ENCODE measurements at regions of chrX and their contacts with region 1.

Region 1: GRCh38 chrX:63754860-63755582 is 30.0 kb downstream of the ARHGEF9 start:
- DNase-seq: peak; percentile 73
- ATAC-seq: peak; percentile 96
- H3K4me3 ChIP-seq: peak overlapping the region; percentile 71
- H3K27ac ChIP-seq: peak overlapping the region; percentile 90
- H3K4me1 ChIP-seq: peaks cover 4% of the 10 kb centered on the region; the same call in 1 of the 2 replicates
- H3K27me3 ChIP-seq: no peaks in the 10 kb centered on the region
- CTCF ChIP-seq: no peak
- EP300 ChIP-seq: no peak
- POLR2A ChIP-seq: peak; percentile 89
- RAD21 ChIP-seq: no peak

Region 2: GRCh38 chrX:63784902-63785707 is 30.1 kb after region 1 on chrX and contains the start of gene ARHGEF9:
- CTCF ChIA-PET with region 1: no interaction called
- POLR2A ChIA-PET with region 1: no interaction called
- RAD21 ChIA-PET with region 1: no interaction called
- SMC1A ChIA-PET with region 1: no interaction called
- in situ Hi-C with region 1: no loop called
- intact Hi-C with region 1: no loop called
- DNase-seq: no peak
- ATAC-seq: no peak
- H3K4me3 ChIP-seq: no peak within 1 kb of the TSS
- H3K27ac ChIP-seq: no peak within 1 kb of the TSS
- H3K4me1 ChIP-seq: no peaks in the 10 kb centered on the region
- H3K27me3 ChIP-seq: no peaks in the 10 kb centered on the region
- CTCF ChIP-seq: no peak
- EP300 ChIP-seq: no peak
- POLR2A ChIP-seq: no peak
- RAD21 ChIP-seq: no peak
- polyA plus RNA-seq, gene ARHGEF9: 3.2 to 4.2 TPM

Region 3: DNA sequence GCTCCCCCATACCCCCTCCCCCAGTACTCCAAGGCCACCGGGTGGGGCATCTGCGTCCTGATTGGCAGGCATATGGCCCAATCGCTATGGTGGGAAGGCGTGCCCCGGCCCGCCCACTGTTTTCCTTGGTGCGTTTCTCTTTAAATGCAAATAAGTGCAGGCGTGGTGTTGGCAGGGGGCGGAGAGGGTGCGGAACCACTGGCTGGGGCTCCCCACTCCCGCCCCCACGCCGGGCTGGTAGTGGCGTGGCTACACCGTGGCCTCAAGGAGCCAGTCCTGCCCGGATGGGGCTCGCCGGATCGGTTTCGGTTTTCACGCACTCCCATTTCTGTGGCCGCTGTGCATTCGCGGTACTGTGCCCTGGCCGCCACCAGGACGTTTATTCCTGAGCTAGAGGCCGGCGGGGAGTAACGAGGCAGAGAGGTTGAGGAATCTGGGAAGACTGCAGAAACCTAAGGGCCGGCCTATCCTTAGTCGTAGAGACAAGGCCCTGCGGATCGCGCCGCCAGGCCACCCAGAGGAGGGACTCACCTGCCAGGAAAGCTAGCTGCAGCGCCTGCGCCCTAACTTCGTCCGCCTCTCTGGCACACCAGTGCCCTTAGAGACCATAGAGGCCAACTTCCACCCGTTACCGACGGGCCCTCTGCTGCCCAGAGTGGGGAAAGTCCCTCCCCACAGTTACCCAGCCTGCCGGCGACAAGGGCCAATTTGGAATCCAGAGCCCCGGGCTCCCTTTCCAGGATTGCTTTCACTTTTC is 450.9 kb after region 1 on chrX:
- CTCF ChIA-PET with region 1: no interaction called
- POLR2A ChIA-PET with region 1: no interaction called
- RAD21 ChIA-PET with region 1: no interaction called
- SMC1A ChIA-PET with region 1: no interaction called
- in situ Hi-C with region 1: no loop called
- intact Hi-C with region 1: loop called (anchors 10 kb)
- DNase-seq: peak; percentile 71
- ATAC-seq: peak; percentile 89
- H3K4me3 ChIP-seq: peak overlapping the region; percentile 62
- H3K27ac ChIP-seq: peak overlapping the region; percentile 84
- H3K4me1 ChIP-seq: no peaks in the 10 kb centered on the region; the same call in 1 of the 2 replicates
- H3K27me3 ChIP-seq: no peaks in the 10 kb centered on the region
- CTCF ChIP-seq: no peak
- EP300 ChIP-seq: no peak
- POLR2A ChIP-seq: peak; percentile 92
- RAD21 ChIP-seq: no peak

Measured in GM12878 (cell line).